Activated naive CD4-positive, alpha-beta T cell treated with anti-CD3 and anti-CD28 coated beads, Interleukin-2, amount 10 ng/mL, durations not matched to agents 7 days and 5 days (primary cell): ENCODE measurements at regions of chr11 and their contacts with region 1.

Region 1: DNA sequence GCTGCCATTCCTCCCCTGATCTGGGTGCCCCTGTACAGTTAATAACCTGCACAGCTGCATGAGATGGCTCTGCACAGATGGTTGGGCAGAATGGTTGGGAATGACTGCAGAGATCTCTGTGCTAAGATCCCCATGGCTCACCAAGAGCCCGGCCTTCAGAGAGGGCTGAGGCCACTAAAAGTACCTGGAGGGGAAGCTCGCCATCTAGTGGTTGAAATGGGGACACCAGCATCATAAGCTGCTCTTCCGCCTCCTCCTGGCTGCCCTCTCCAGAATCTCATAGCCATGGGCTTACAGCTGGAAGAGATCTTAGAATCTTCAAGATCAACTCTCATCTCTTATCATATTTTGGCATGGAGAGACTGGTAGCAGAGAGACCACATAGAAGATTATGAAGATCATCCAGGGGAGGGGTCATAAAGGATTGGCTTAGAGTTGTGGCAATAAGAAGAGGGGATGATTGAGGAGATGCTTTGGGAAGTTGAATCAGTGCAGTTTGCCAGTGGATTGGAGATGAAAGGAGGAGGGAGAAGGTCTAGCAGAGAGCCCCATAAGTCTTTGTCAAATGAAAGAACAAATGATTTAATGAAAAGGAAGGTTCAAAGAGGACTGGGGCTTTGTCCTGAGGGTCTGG is 22.0 kb upstream of the TLCD5 start:
- DNase-seq: peak; percentile 68
- H3K4me3 Mint-ChIP-seq: no peak overlapping the region
- H3K27ac Mint-ChIP-seq: no peak overlapping the region
- H3K4me1 Mint-ChIP-seq: no peaks in the 10 kb centered on the region
- H3K27me3 Mint-ChIP-seq: peaks cover 46% of the 10 kb centered on the region

Region 2: DNA sequence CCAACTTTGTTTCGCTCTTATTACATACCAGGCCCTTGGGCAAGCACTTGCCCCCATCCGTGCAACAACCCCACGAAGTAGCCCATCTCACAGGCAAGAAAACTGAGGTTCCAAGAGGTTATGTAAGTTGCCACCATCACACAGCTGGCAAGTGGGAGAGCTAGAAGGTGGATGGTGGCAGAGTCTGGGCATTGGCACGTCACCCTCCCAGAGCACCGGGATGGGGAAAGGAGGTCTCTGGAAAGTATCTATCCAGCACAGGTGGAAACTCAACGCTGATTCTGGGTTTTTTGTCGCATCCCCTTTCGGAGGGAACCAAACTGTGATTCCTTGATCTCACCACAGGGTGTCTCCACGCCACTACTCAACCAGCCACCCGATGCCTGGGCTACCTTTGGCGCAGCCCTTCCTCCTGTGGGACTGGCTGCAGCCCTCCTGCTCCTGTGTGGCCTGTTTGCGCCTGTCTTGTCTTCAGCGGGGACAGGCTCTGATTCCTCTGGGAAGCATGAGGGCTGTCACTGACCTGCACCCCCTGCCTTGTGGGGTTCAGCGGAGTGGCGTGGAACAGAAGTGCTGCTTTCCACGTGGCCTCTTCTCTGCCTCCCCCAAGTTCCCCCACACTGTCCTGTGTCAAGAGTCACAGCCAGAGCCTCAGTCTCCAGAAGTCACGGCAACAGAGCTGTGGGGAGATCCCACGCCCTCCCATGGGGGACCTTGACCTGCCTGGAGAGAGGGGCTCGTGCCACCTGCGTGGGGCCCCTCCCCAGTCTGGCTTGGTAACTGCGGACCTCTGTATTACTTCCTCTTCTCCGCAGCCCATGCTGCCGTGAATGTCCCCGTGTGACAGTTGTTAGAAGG is 130.8 kb before region 1 on chr11:
- CTCF ChIA-PET with region 1: interaction called, 17 read pairs
- DNase-seq: peak; percentile 65
- H3K4me3 Mint-ChIP-seq: no peak overlapping the region
- H3K27ac Mint-ChIP-seq: no peak overlapping the region
- H3K4me1 Mint-ChIP-seq: peaks cover 5% of the 10 kb centered on the region
- H3K27me3 Mint-ChIP-seq: peaks cover 79% of the 10 kb centered on the region

Region 3: GRCh38 chr11:120235024-120235861 is 67.9 kb before region 1 on chr11:
- CTCF ChIA-PET with region 1: interaction called, 234 read pairs
- DNase-seq: peak; percentile 76
- H3K4me3 Mint-ChIP-seq: no peak overlapping the region
- H3K27ac Mint-ChIP-seq: no peak overlapping the region
- H3K4me1 Mint-ChIP-seq: no peaks in the 10 kb centered on the region
- H3K27me3 Mint-ChIP-seq: peaks cover 79% of the 10 kb centered on the region

Region 4: GRCh38 chr11:120248551-120249278 is 54.4 kb before region 1 on chr11:
- CTCF ChIA-PET with region 1: interaction called, 24 read pairs
- DNase-seq: no peak
- H3K4me3 Mint-ChIP-seq: no peak overlapping the region
- H3K27ac Mint-ChIP-seq: no peak overlapping the region
- H3K4me1 Mint-ChIP-seq: peaks cover 35% of the 10 kb centered on the region
- H3K27me3 Mint-ChIP-seq: peaks cover 95% of the 10 kb centered on the region

Region 5: GRCh38 chr11:120511116-120511819 is 208.1 kb after region 1 on chr11 and contains the start of gene GRIK4:
- CTCF ChIA-PET with region 1: no interaction called
- DNase-seq: peak; percentile 79
- H3K4me3 Mint-ChIP-seq: no peak within 1 kb of the TSS
- H3K27ac Mint-ChIP-seq: no peak within 1 kb of the TSS
- H3K4me1 Mint-ChIP-seq: peaks cover 2% of the 10 kb centered on the region
- H3K27me3 Mint-ChIP-seq: peaks cover 71% of the 10 kb centered on the region